Activated CD4-positive, alpha-beta T cell treated with anti-CD3 and anti-CD28 coated beads, Interleukin-2, amount 10 ng/mL, durations not matched to agents 24 days and 14 days (primary cell): ENCODE measurements at regions of chr2 and their contacts with region 1.

Region 1: GRCh38 chr2:174797781-174798276 is 33.6 kb upstream of the CHRNA1 start:
- DNase-seq: no peak
- H3K4me3 Mint-ChIP-seq: no peak overlapping the region
- H3K27ac Mint-ChIP-seq: no peak overlapping the region
- H3K4me1 Mint-ChIP-seq: peaks cover 19% of the 10 kb centered on the region
- H3K27me3 Mint-ChIP-seq: no peaks in the 10 kb centered on the region

Region 2: DNA sequence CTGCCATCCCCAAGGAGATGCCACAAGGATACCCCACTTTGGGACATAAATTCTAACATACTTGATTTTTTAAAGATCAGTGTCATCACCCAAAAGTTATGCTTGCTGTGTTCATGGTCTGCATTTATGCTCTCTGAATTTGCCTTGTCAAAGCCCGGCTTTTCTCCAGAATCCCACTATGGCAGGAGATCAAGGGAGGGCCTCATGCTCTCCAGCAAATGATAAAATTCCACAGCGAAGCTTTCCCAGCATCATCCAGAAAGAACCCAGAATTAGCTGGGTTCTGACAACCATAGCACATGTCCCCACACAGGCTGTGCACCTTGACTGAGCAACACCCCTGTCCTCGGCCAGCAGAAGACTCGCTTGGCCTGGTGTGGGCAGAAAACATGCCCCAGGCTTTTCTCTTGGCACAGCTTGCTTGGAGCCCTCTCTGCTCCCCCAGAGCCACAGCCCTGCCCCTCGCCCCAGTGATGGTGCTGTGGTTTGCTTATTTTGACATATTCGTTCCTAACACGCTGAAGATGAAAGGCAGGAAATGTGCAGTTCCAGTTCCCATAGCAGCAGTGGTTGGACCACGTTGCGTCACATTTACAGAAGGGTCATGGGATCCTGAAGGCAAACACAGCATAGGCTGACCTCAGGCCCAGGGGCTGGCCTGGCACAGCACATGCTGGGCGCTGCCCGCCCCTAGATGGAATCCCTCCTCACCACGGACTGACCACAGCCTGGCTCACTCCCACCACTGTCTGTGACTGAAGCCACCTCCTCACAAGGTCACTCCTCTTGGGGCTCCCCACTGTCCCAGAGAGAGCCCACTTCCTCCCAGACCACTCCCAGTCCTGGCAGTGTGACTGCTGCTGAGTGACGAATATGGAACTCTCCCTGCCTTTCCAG is 19.5 kb before region 1 on chr2:
- intact Hi-C with region 1: loop called (anchors 1 kb)
- DNase-seq: peak; percentile 95
- H3K4me3 Mint-ChIP-seq: peak overlapping the region; percentile 70
- H3K27ac Mint-ChIP-seq: peak overlapping the region; percentile 95
- H3K4me1 Mint-ChIP-seq: peaks cover 47% of the 10 kb centered on the region
- H3K27me3 Mint-ChIP-seq: no peaks in the 10 kb centered on the region

Region 3: GRCh38 chr2:174888646-174889271 is 90.9 kb after region 1 on chr2:
- intact Hi-C with region 1: loop called (anchors 2 kb)
- DNase-seq: no peak
- H3K4me3 Mint-ChIP-seq: no peak overlapping the region
- H3K27ac Mint-ChIP-seq: no peak overlapping the region
- H3K4me1 Mint-ChIP-seq: peaks cover 7% of the 10 kb centered on the region
- H3K27me3 Mint-ChIP-seq: peaks cover 3% of the 10 kb centered on the region

Region 4: DNA sequence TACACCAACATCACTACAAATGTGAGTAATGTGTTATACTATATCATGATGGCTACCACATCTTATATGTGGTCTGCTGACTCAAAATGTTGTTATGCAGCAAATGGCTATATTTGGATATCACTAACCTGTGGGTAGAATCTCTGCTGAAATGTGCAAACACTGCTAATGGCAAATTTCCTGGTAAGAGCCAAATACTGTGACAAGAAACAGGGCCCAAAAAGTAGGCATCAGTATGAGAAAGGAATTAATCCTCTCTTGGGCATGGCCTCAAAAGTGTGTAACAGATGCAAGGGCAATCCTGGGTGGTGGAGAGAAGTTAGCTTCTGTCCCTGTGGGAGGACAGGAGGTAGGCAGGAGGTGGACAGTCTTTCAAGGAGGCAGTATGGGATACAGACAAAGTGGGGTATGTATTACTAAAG is 356.8 kb after region 1 on chr2:
- intact Hi-C with region 1: loop called (anchors 10 kb)
- DNase-seq: peak; percentile 64
- H3K4me3 Mint-ChIP-seq: peak overlapping the region; percentile 24
- H3K27ac Mint-ChIP-seq: peak overlapping the region; percentile 86
- H3K4me1 Mint-ChIP-seq: peaks cover 22% of the 10 kb centered on the region
- H3K27me3 Mint-ChIP-seq: no peaks in the 10 kb centered on the region

Region 5: DNA sequence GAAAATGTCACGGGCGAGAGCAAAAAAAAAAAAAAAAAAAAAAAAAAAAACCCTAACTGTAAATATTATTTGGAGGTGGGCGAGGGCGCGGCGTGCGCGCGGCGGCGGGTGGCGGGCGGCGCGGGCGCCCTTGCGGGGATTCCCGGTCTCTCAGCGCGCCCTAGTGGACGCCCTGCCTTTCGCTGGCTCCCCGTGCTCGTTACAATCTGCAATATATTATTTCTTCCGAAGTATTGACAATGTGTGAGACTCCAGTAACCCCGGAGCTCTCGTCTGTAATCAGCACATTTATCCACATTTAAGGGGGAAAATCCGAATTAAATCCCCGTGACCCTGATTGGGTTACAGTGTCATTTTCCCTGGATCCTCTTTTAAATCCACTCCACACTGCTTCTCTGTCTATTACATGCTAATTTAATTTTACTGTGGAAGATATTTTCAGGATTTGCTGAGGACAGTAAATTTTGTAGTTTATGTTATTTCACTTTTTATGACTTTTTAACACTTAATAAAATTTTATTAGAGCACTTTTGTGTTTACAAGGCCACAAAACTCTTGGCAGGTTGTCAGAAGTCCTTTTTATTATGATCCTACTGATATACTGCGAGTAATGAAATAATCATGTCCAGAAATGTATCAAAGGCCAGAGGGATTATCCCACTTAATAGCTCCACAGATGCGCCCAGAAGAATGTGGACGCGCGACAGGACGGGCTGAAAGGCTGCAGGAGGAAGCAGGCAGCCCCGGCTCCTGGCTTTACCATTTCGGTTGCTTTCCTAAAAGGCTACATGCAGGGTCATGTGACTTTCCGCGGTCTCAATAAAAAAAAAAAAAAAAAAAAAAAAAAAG is 1840.6 kb after region 1 on chr2:
- intact Hi-C with region 1: no loop called
- DNase-seq: peak; percentile 87
- H3K4me3 Mint-ChIP-seq: peak overlapping the region; percentile 77
- H3K27ac Mint-ChIP-seq: no peak overlapping the region
- H3K4me1 Mint-ChIP-seq: peaks cover 5% of the 10 kb centered on the region
- H3K27me3 Mint-ChIP-seq: peaks cover 62% of the 10 kb centered on the region